Left ventricle myocardium superior (tissue), 1 donor: ENCODE measurements at regions of chr7 and their contacts with region 1.

Region 1: GRCh38 chr7:17706734-17707133 is 233.6 kb downstream of the SNX13 start:
- DNase-seq: no peak
- ATAC-seq: peak; percentile 81

Region 2: DNA sequence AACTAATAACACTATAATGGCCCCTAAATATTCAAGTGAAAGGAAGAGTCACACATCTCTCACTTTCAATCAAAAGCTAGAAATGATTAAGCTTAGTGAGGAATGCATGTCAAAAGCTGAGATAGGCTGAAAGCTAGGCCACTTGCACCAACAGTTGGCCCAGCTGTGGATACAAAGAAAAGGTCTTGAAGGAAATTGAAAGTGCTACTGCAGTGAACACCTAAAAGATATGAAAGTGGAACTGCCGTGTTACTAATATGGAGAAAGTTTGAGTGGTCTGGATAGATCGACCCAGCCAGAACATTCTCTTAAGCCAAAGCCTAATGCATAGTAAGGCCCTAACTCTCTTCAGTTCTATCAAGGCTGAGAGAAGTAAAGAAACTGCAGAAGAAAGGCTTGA is 245.7 kb after region 1 on chr7:
- intact Hi-C with region 1: loop called (anchors 10 kb)
- DNase-seq: no peak
- ATAC-seq: no peak